ENCODE measurements at regions of chr1 and their contacts with region 1.

Region 1: GRCh38 chr1:156583821-156584622 is 4.5 kb downstream of the TTC24 start:
- DNase-seq: peak; percentile 88
- ATAC-seq: peak; percentile 17
- H3K4me3 Mint-ChIP-seq: peak overlapping the region; percentile 86
- H3K27ac Mint-ChIP-seq: peak overlapping the region; percentile 93
- H3K4me1 Mint-ChIP-seq: peaks cover 39% of the 10 kb centered on the region
- H3K27me3 Mint-ChIP-seq: no peaks in the 10 kb centered on the region

Region 2: GRCh38 chr1:156456622-156457465 is 127.2 kb before region 1 on chr1:
- CTCF ChIA-PET with region 1: interaction called, 11 read pairs
- POLR2A ChIA-PET with region 1: interaction called, 4 read pairs
- DNase-seq: peak; percentile 97
- ATAC-seq: peak; percentile 88
- H3K4me3 Mint-ChIP-seq: peak overlapping the region; percentile 84
- H3K27ac Mint-ChIP-seq: peak overlapping the region; percentile 95
- H3K4me1 Mint-ChIP-seq: peaks cover 18% of the 10 kb centered on the region
- H3K27me3 Mint-ChIP-seq: peaks cover 15% of the 10 kb centered on the region

Region 3: GRCh38 chr1:156508163-156508887 is 75.7 kb before region 1 on chr1:
- CTCF ChIA-PET with region 1: interaction called, 13 read pairs
- POLR2A ChIA-PET with region 1: interaction called, 7 read pairs
- DNase-seq: no peak
- ATAC-seq: no peak
- H3K4me3 Mint-ChIP-seq: peak overlapping the region; percentile 77
- H3K27ac Mint-ChIP-seq: peak overlapping the region; percentile 91
- H3K4me1 Mint-ChIP-seq: peaks cover 61% of the 10 kb centered on the region
- H3K27me3 Mint-ChIP-seq: peaks cover 3% of the 10 kb centered on the region

Region 4: GRCh38 chr1:156524481-156524869 is 59.5 kb before region 1 on chr1:
- CTCF ChIA-PET with region 1: interaction called, 14 read pairs
- POLR2A ChIA-PET with region 1: interaction called, 15 read pairs
- DNase-seq: peak; percentile 62
- ATAC-seq: peak; percentile 76
- H3K4me3 Mint-ChIP-seq: peak overlapping the region; percentile 60
- H3K27ac Mint-ChIP-seq: peak overlapping the region; percentile 92
- H3K4me1 Mint-ChIP-seq: peaks cover 48% of the 10 kb centered on the region
- H3K27me3 Mint-ChIP-seq: no peaks in the 10 kb centered on the region

Region 5: DNA sequence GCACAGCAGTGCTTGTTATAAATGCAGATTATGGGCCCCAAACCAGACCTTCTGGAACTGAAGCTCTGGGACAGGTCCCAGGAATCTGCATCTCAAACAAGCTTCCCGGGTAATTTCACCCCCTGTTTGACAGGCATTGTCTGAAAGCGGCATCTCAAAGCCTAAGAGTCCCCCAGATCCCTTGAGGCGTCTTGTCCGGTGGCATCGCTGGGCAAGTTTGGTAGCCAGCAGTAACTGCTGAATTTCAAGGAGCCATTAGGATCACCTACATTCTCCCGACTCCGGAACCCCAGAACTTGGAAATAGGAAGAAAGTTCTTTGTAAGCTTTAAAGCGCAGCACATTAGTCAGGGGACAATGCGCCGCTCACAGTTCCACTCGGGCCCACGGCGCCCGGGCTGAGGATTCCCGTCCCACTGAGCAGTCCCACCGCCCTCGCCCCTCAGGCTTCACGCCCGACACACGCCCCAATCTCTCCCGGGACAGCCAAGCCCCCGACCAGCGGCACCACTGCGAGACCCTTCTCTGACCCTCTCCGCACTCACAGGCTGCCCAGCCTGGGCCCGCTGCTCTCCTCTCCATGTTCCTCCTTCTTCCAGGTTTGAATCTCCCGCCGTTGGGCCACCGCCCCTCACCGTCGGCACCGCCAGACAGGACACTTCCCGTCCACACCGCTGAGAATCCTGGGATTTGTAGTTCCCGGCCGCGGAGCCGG is 11.9 kb before region 1 on chr1 and contains the start of gene IQGAP3:
- CTCF ChIA-PET with region 1: interaction called, 24 read pairs
- POLR2A ChIA-PET with region 1: interaction called, 3 read pairs
- DNase-seq: peak; percentile 86
- ATAC-seq: peak; percentile 96
- H3K4me3 Mint-ChIP-seq: peak within 1 kb of the TSS; percentile 97
- H3K27ac Mint-ChIP-seq: peak within 1 kb of the TSS; percentile 80
- H3K4me1 Mint-ChIP-seq: peaks cover 23% of the 10 kb centered on the region
- H3K27me3 Mint-ChIP-seq: peaks cover 11% of the 10 kb centered on the region
- total RNA-seq, gene IQGAP3: 28.6 to 31.0 TPM

Region 6: DNA sequence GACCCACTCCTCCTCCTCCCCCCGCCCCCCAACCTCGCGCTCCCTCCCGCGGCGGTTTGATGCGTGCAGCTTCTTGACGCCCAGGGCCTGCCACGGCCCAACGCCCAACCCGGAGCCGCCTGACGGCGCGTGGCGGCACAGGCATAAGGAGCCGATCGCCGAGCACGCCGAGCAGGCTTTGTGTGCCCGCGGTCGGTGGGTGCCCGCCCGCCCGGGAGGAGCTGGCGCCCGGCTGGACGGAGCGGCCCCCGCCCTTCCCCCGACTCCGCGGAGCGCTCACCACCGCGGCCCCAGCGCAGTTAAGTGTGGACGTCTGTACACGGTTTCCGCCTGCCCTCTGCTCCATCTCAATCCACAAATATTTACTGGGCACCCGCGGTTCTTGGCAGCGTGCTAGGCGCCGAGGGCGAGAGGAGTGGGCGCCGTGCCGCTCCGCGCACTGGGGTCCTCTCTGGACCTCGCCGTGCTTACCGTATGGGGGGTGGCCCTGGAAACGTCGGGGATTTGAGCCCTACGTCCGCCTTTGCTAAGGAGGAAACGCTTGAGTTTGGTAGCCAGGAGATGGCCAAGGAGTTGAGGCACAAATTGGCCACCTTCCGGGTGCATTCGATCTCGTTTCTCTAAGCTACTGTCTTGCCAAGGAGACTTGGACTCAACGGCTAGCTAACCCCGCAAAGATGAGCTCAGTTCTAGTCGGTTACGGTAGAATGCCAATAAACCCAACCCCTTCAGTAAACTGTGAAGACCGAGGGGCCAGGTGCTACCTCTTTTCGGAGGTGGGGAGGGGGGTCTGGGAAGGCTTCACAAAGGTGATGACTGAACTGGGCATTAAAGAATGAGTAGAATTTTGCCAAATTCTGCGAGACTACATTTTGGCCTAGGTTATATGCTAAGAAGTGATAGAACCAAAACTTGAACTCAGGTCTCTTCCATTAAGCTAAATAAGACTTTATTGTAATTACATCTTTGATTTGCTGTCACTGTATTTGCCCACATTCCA is 168.0 kb after region 1 on chr1:
- CTCF ChIA-PET with region 1: no interaction called
- POLR2A ChIA-PET with region 1: no interaction called
- DNase-seq: peak; percentile 98
- ATAC-seq: peak; percentile 83
- H3K4me3 Mint-ChIP-seq: peak overlapping the region; percentile 96
- H3K27ac Mint-ChIP-seq: peak overlapping the region; percentile 96
- H3K4me1 Mint-ChIP-seq: peaks cover 37% of the 10 kb centered on the region
- H3K27me3 Mint-ChIP-seq: no peaks in the 10 kb centered on the region

Measured in activated CD8-positive, alpha-beta T cell treated with anti-CD3 and anti-CD28 coated beads, Interleukin-2, amount 10 ng/mL, durations not matched to agents 7 days and 5 days (primary cell).